ENCODE measurements at regions of chr12 and their contacts with region 1.

Region 1: GRCh38 chr12:76137606-76138005 is 53.1 kb upstream of the NAP1L1 start:
- DNase-seq: no peak
- H3K4me3 ChIP-seq: no peak overlapping the region
- H3K4me3 Mint-ChIP-seq: no peak overlapping the region
- H3K27ac Mint-ChIP-seq: no peak overlapping the region
- H3K4me1 ChIP-seq: no peaks in the 10 kb centered on the region
- H3K4me1 Mint-ChIP-seq: no peaks in the 10 kb centered on the region
- H3K27me3 ChIP-seq: no peaks in the 10 kb centered on the region
- H3K27me3 Mint-ChIP-seq: no peaks in the 10 kb centered on the region
- CTCF ChIP-seq: no peak

Region 2: GRCh38 chr12:76173756-76174155 is 36.1 kb after region 1 on chr12:
- CTCF ChIA-PET with region 1: no interaction called
- POLR2A ChIA-PET with region 1: no interaction called
- intact Hi-C with region 1: loop called (anchors 2 kb)
- DNase-seq: no peak
- H3K4me3 ChIP-seq: no peak overlapping the region
- H3K4me3 Mint-ChIP-seq: no peak overlapping the region
- H3K27ac Mint-ChIP-seq: no peak overlapping the region
- H3K4me1 ChIP-seq: peaks cover 6% of the 10 kb centered on the region
- H3K4me1 Mint-ChIP-seq: peaks cover 5% of the 10 kb centered on the region
- H3K27me3 ChIP-seq: no peaks in the 10 kb centered on the region
- H3K27me3 Mint-ChIP-seq: no peaks in the 10 kb centered on the region
- CTCF ChIP-seq: no peak

Region 3: DNA sequence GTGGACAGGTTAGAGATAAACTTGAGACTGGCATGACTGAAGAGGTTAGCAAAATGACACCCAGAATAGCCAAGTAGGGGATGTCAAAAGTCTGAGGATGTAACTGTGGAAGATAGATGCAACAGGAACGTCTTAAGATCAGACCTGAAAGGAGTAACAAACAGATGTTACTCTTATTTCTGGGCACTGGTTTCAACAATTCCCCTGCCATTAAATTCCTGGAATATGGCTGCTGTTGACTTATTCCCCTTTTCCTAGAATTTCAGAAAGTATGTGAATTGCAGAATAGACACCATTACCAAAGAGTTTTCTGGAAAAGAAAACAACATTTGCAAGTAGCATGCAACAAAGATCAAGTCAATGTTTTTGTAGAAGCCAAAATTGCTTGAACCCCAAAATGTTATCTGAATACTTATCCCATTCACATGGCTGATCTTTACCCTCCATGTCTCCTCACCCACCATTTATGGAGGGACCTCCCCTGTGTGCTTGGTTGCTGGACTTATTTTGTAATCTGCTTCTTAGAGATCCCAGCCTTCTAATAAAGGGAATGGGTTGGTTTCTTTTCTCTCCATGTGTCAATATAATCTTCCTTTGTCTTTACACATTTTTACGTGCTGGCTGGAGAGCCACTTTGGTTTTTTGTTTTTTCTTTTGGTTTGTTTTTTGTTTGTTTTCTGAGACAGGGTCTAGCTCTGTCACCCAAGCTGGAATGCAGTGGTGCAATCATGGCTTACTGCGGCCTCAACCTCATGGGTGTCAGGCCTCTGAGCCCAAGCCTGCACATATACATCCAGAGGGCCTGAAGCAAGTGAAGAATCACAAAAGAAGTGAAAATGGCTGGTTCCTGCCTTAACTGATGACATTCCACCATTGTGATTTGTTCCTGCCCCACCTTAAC is 153.6 kb after region 1 on chr12:
- CTCF ChIA-PET with region 1: no interaction called
- POLR2A ChIA-PET with region 1: no interaction called
- intact Hi-C with region 1: no loop called
- DNase-seq: no peak
- H3K4me3 ChIP-seq: no peak overlapping the region
- H3K4me3 Mint-ChIP-seq: no peak overlapping the region
- H3K27ac Mint-ChIP-seq: no peak overlapping the region
- H3K4me1 ChIP-seq: no peaks in the 10 kb centered on the region
- H3K4me1 Mint-ChIP-seq: no peaks in the 10 kb centered on the region
- H3K27me3 ChIP-seq: no peaks in the 10 kb centered on the region
- H3K27me3 Mint-ChIP-seq: no peaks in the 10 kb centered on the region
- CTCF ChIP-seq: no peak

Measured in Caco-2 (cell line).